A549 (cell line): ENCODE measurements at regions of chr1 and their contacts with region 1.

Region 1: DNA sequence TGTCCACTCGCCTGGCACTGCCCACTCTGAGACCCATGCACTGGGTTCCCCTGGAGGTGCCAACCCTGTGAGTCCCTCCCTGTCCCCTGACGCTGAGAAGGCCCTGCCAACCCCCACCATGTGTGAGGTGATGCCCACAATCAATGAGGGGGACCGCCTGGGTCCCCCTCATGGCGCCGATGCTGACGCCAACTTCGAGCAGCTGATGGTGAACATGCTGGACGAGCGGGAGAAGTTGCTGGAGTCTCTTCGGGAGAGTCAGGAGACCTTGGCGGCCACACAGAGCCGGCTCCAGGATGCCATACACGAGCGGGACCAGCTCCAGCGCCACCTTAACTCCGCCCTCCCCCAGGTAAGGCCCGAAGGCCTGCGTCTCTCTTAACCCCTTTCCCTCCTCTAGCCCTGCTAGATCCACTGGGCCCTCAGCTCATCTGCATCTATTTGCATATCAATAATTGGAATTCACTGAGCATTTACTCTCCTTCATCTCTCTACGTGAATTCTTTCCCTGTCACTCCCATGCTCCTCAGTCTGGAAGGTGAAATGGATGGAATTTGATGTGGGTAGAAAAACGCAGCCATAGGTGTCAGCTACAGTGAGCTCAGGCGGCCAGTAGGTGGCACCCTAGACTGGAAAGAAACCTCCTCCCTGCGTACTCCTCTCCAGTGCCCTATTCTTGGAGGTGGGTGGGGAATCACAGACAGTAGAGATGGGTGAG is 12.8 kb downstream of the PPFIA4 start:
- DNase-seq: peak; percentile 68 to 86
- ATAC-seq: peak; percentile 71 to 93
- H3K4me3 ChIP-seq: no peak overlapping the region
- H3K27ac ChIP-seq: peak overlapping the region in 1 of 2 experiments; percentile 40; a peak in 2 of 6 replicates
- H3K4me1 ChIP-seq: peaks cover 15% of the 10 kb centered on the region; the same call in 2 of the 3 replicates
- CTCF ChIP-seq: peak; percentile 87
- EP300 ChIP-seq: no peak
- POLR2A ChIP-seq: no peak
- RAD21 ChIP-seq: peak; percentile 89 to 91

Region 2: GRCh38 chr1:202880961-202881460 is 158.0 kb before region 1 on chr1:
- CTCF ChIA-PET with region 1: no interaction called
- POLR2A ChIA-PET with region 1: no interaction called
- DNase-seq: no peak
- ATAC-seq: no peak
- H3K4me3 ChIP-seq: no peak overlapping the region
- H3K27ac ChIP-seq: no peak overlapping the region
- H3K4me1 ChIP-seq: no peaks in the 10 kb centered on the region
- CTCF ChIP-seq: no peak
- EP300 ChIP-seq: no peak
- POLR2A ChIP-seq: no peak
- RAD21 ChIP-seq: no peak

Region 3: GRCh38 chr1:202892511-202892910 is 146.5 kb before region 1 on chr1:
- CTCF ChIA-PET with region 1: no interaction called
- POLR2A ChIA-PET with region 1: no interaction called
- DNase-seq: no peak
- ATAC-seq: no peak
- H3K4me3 ChIP-seq: no peak overlapping the region
- H3K27ac ChIP-seq: no peak overlapping the region
- H3K4me1 ChIP-seq: peaks cover 8% of the 10 kb centered on the region
- CTCF ChIP-seq: no peak
- EP300 ChIP-seq: no peak
- POLR2A ChIP-seq: no peak
- RAD21 ChIP-seq: no peak

Region 4: GRCh38 chr1:203101915-203102634 is 63.0 kb after region 1 on chr1:
- CTCF ChIA-PET with region 1: interaction called, 14 read pairs
- POLR2A ChIA-PET with region 1: no interaction called
- DNase-seq: no peak
- ATAC-seq: no peak
- H3K4me3 ChIP-seq: no peak overlapping the region
- H3K27ac ChIP-seq: no peak overlapping the region
- H3K4me1 ChIP-seq: no peaks in the 10 kb centered on the region
- CTCF ChIP-seq: no peak
- EP300 ChIP-seq: no peak
- POLR2A ChIP-seq: no peak
- RAD21 ChIP-seq: no peak

Region 5: GRCh38 chr1:203127666-203128430 is 88.8 kb after region 1 on chr1 and contains the start of gene ADORA1:
- CTCF ChIA-PET with region 1: interaction called, 31 read pairs
- POLR2A ChIA-PET with region 1: no interaction called
- DNase-seq: peak; percentile 43 to 55
- ATAC-seq: peak; percentile 88 to 93
- H3K4me3 ChIP-seq: peak within 1 kb of the TSS; percentile 41
- H3K27ac ChIP-seq: peak within 1 kb of the TSS; percentile 32 to 67; a peak in 4 of 6 replicates
- H3K4me1 ChIP-seq: peaks cover 23% of the 10 kb centered on the region; the same call in 1 of the 3 replicates
- CTCF ChIP-seq: no peak
- EP300 ChIP-seq: no peak
- POLR2A ChIP-seq: no peak
- RAD21 ChIP-seq: no peak
- polyA plus RNA-seq, gene ADORA1: 0.48 and 0.50 TPM in 2 replicates

Region 6: DNA sequence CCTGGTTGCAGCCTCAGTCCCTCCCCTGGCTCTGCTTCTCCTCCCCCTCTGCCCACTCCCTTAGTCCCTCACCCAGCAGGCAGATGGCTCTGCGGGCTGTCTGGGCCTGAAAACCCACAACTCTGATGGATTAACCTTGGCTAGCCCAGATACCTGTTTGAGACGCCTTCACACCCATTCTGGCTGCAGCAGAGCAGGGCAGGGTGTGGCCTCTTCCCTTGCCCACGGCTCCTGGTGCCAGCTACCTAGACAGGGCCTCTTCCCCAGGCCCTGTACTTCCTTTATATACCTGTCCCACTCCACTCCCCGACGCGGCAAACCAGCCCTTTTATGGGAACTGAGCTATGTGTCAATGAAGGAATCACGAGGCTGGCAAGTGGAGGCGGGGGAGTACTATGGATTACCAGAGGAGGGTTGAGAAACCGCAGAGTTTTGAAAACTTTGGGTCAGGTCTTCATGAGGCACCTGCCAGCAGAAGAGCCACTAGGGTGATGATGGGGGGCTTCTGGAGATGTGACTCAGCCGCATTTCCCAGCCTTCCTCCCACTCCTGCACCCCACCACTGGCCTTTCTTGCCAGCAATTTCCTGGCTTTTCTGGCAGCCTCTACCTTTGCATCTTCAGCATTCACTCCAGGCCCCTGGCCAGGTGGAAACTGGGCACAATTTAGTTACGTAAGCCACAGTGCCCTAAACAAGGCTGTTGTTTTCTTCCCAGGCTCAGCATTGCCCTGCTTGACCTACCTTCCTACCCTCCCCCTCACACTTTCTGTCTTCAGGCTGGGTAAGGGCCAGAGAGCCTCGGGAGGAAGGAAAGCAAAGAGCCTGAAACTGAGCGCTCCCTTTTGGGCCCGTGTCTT is 147.6 kb after region 1 on chr1 and contains the start of gene CHI3L1:
- CTCF ChIA-PET with region 1: interaction called, 15 read pairs
- POLR2A ChIA-PET with region 1: no interaction called
- DNase-seq: no peak
- ATAC-seq: no peak
- H3K4me3 ChIP-seq: no peak within 1 kb of the TSS
- H3K27ac ChIP-seq: no peak within 1 kb of the TSS
- H3K4me1 ChIP-seq: no peaks in the 10 kb centered on the region
- CTCF ChIP-seq: no peak
- EP300 ChIP-seq: no peak
- POLR2A ChIP-seq: no peak
- RAD21 ChIP-seq: no peak
- polyA plus RNA-seq, gene CHI3L1: not detected in 2 replicates

Region 7: DNA sequence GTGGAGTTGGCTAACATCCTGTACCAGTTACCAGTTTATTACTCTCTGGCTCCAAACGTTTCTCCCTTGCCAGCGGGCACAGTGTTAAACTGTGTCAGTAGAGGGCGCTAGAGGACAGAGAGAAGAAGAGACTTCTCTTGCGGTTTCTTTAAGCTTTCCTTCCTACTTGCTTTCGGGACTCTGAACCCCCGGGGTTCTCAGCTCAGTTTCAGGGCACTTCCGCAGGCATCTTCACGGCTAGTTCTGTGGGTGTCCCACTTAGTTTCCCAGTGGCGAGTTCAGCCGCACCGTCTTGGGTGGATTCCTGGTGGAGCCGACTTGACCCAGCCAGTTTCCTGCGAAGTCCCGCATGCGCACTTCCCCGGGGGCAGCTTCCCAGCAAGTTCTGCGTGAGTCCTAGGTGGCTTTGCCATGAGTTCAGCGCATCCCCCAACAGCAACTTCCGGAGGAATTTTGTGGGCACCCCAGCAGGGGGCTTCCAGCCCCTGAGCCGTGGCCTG is 228.3 kb after region 1 on chr1:
- CTCF ChIA-PET with region 1: interaction called, 266 read pairs
- POLR2A ChIA-PET with region 1: interaction called, 8 read pairs
- DNase-seq: peak; percentile 85 to 89
- ATAC-seq: peak; percentile 76 to 83
- H3K4me3 ChIP-seq: peak overlapping the region; percentile 53
- H3K27ac ChIP-seq: peak overlapping the region; percentile 85 to 91
- H3K4me1 ChIP-seq: peaks cover 7% of the 10 kb centered on the region; the same call in 1 of the 3 replicates
- CTCF ChIP-seq: peak; percentile 95
- EP300 ChIP-seq: no peak
- POLR2A ChIP-seq: peak; percentile 61
- RAD21 ChIP-seq: peak; percentile 77 to 79